ENCODE measurements at regions of chr14 and their contacts with region 1.

Region 1: GRCh38 chr14:92585981-92586937 is 72.7 kb downstream of the RIN3 start:
- DNase-seq: peak; percentile 53
- ATAC-seq: peak; percentile 62
- H3K4me3 Mint-ChIP-seq: peak overlapping the region; percentile 73
- H3K27ac Mint-ChIP-seq: peak overlapping the region; percentile 89
- H3K4me1 Mint-ChIP-seq: peaks cover 79% of the 10 kb centered on the region
- H3K27me3 Mint-ChIP-seq: no peaks in the 10 kb centered on the region

Region 2: DNA sequence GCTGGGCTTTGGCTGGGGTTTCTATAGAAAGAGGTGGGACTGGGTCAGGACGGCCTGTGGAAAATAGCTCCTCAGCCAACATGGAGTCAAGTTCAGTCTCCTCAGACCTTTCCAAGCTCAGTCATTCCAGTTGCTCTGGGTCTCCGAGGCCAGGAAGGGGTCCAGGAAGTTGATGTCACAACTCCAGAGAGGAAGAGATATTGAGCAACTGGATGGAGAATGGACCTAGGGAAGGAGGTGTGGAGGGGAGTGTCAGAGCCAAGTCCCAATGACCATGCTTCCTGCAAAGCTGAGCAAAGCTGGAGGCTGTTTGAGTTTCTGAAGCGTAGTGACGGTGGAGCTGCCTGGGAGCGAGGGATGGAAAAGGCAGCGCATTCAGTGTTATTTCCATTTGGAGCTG is 177.2 kb before region 1 on chr14:
- POLR2A ChIA-PET with region 1: no interaction called
- DNase-seq: no peak
- ATAC-seq: no peak
- H3K4me3 Mint-ChIP-seq: no peak overlapping the region
- H3K27ac Mint-ChIP-seq: no peak overlapping the region
- H3K4me1 Mint-ChIP-seq: no peaks in the 10 kb centered on the region
- H3K27me3 Mint-ChIP-seq: peaks cover 8% of the 10 kb centered on the region

Region 3: GRCh38 chr14:92563359-92563758 is 22.9 kb before region 1 on chr14:
- POLR2A ChIA-PET with region 1: interaction called, 20 read pairs
- DNase-seq: no peak
- ATAC-seq: peak; percentile 79
- H3K4me3 Mint-ChIP-seq: peak overlapping the region; percentile 35
- H3K27ac Mint-ChIP-seq: peak overlapping the region; percentile 43
- H3K4me1 Mint-ChIP-seq: peaks cover 65% of the 10 kb centered on the region
- H3K27me3 Mint-ChIP-seq: no peaks in the 10 kb centered on the region

Region 4: DNA sequence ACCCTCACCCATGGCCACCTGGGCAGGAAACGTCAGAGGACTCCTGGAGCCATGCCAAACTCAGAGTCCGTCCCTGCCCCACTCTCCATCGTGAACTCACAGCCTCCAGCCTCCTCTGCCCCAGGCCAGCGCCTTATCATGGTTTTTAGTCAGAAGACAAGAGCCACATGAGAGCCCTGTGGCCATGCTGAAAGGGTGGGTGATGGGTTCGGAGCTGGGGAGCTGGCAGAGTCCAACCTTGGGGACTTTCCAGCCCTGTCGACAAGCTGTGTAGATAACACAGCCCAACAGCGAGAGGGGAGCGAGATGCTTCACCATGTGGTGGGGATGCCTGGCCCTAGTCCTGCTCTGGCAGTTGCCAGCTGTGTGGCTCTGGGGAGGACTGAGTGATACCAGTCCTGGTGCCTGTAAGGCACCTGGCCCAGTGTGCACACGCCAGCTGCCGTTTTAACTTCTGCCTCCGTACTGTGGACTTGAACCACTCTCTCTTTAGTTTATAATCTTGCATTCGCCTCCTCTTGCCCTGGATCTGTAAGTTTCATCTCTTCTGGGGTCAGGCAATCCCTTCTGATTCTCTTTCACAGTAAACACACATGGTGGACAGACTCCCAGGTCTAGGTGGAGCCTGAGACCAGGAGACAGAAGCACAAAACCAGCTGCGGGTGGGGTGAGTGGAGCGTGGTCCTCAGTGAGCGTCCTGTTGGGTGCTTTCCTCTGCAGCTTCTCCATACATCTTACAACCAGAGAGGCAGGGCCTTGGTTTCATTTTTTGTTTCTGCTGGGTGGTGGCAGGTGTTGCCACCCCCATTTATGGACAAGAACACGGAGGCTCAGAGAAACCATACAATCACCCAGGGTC is 17.4 kb before region 1 on chr14:
- POLR2A ChIA-PET with region 1: interaction called, 20 read pairs
- DNase-seq: peak; percentile 59
- ATAC-seq: peak; percentile 79
- H3K4me3 Mint-ChIP-seq: peak overlapping the region; percentile 86
- H3K27ac Mint-ChIP-seq: peak overlapping the region; percentile 97
- H3K4me1 Mint-ChIP-seq: peaks cover 59% of the 10 kb centered on the region
- H3K27me3 Mint-ChIP-seq: no peaks in the 10 kb centered on the region

Region 5: GRCh38 chr14:92603309-92604242 is 17.3 kb after region 1 on chr14:
- POLR2A ChIA-PET with region 1: no interaction called
- DNase-seq: no peak
- ATAC-seq: peak; percentile 49
- H3K4me3 Mint-ChIP-seq: no peak overlapping the region
- H3K27ac Mint-ChIP-seq: no peak overlapping the region
- H3K4me1 Mint-ChIP-seq: peaks cover 25% of the 10 kb centered on the region
- H3K27me3 Mint-ChIP-seq: no peaks in the 10 kb centered on the region

Measured in activated naive CD8-positive, alpha-beta T cell treated with anti-CD3 and anti-CD28 coated beads, Interleukin-2, amount 10 ng/mL, durations not matched to agents 7 days and 5 days (primary cell).